AG04449 (cell line): ENCODE measurements at regions of chr20 and their contacts with region 1.

Region 1: DNA sequence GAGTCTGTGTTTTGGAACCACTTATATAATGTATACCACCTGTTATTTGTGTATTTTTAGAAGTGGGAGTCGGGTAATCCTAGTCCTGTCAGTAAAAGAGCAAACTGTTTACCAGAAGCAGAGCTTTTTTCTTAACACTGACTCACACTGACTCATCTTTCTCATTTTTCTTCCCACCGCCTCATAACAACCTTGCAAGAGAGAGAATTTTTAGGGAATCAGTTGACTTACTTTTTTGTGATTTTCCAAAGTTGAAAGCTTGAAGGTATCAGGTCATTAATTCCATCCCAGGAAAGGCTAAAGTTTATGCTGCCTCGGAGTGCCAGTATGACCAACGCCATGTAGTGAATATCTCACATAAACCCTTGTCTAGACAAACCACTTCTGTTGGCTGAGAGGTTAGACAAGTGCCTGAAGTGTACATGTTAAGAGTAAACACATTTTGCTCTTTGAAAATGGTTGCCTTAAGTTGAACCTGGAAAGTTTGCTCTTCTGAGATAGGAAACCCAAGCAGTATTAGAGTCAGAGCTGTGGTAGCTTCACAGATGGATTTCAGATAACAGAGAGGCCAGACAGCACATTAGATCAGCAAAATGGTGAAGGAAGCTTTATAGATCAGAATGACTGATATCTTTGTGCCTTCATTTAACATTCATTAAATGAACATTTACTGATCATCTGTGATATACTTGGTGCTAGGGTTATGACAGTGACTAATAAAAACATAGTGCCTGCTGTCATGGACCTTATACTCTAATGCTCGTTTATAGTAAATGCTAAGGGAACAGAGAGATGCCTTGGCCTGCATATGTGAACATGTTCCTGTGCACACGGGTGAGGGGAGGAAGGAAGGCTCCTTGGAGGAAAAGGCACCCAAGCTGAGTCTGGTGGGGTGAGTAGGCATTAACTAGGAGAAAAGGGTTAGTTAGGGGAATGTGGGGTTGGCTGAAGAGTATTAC is 29.1 kb upstream of the PKIG start:
- DNase-seq: no peak
- H3K4me3 ChIP-seq: no peak overlapping the region
- CTCF ChIP-seq: no peak

Region 2: DNA sequence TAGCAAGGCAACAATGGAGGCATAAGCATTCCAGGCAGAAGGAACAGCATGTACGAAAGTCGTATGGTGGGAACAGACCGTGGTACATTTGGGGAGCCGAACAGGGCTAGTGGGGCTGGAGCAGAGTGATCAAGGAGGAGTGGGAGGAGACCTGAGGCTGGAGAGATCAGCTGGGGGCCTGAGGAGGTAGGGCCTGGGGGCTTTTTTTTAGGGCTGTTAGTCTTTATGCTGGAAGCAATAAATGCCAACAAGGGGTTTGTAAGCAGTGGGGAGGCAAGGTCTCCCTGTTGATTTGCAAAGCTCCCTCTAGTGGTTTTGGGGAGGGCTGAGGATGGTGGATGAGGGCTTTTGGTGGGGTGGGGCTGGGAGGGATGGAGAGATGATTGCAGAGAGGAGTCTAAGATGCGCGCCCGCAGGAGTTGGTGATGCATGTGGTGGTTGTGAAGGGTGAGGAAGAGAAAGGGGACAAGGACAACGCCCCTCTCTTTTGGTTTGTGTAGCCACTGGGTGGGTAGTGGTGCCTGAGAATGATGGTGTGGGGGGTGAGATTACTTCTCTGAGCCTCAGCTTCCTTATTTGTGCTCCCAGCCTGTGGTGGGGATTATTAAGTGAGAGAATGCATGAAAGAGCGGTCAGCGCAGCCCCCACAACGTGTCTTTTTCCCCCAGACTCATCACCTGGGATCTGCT is 712.7 kb before region 1 on chr20:
- CTCF ChIA-PET with region 1: no interaction called
- POLR2A ChIA-PET with region 1: no interaction called
- DNase-seq: no peak
- H3K4me3 ChIP-seq: no peak overlapping the region
- CTCF ChIP-seq: peak; percentile 50

Region 3: GRCh38 chr20:44576297-44576696 is 23.1 kb after region 1 on chr20:
- CTCF ChIA-PET with region 1: interaction called, 5 read pairs
- POLR2A ChIA-PET with region 1: interaction called, 10 read pairs
- DNase-seq: no peak
- H3K4me3 ChIP-seq: no peak overlapping the region
- CTCF ChIP-seq: peak; percentile 34